GM12878 (cell line): ENCODE measurements at regions of chr16 and their contacts with region 1.

Region 1: GRCh38 chr16:84607694-84608093 is 10.2 kb downstream of the COTL1 start:
- DNase-seq: no peak
- ATAC-seq: peak; percentile 62
- H3K4me3 ChIP-seq: peak overlapping the region; percentile 43
- H3K27ac ChIP-seq: peak overlapping the region; percentile 63
- H3K4me1 ChIP-seq: peaks cover 60% of the 10 kb centered on the region
- H3K27me3 ChIP-seq: no peaks in the 10 kb centered on the region
- CTCF ChIP-seq: no peak
- EP300 ChIP-seq: peak; percentile 47 to 54; a peak in 2 of 4 replicates
- POLR2A ChIP-seq: peak; percentile 62; the same call in 1 of the 2 replicates
- RAD21 ChIP-seq: no peak

Region 2: DNA sequence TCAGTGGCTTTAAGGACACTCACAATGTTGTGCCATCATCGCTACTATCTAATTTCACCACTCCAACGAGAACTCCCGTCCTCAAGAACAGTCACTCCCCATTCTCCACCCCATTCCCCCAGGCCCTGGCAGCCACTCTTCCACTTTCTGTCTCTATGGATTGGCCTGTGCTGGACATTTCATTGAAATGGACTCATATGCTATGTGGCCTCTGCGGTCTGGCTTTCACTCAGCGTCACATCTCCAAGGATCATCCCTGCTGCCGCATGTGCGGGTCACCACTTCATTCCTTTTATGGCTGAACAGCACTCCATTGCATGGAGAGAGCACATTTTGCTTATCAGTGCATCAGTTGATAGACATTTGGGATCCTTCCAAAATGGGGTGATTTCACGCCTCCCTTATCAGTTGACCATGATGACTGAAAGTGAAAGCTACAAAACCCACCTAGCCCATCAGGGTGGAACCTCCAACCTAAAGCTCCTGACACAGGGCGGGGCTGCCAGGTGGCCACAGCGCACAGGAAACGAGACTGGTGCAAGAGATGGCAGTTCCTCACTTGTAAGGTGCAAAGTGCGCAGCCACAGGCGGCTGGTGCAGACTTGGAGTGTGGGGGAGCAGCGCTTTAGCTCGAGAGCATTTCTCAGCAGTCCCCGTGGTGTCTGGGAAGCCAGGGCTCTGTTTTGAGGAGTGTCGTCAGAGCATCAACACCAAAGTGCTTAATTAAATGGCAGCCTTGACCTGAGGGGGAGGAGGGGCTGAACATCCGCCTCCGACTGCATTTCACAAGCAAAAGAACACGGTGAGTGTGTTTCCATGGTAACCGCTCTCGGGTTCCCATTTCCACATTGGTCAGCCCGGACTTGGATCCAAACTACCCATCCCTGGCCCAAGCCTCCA is 13.6 kb before region 1 on chr16:
- CTCF ChIA-PET with region 1: interaction called, 9 read pairs
- POLR2A ChIA-PET with region 1: interaction called, 214 read pairs
- RAD21 ChIA-PET with region 1: interaction called, 224 read pairs
- SMC1A ChIA-PET with region 1: interaction called, 229 read pairs
- in situ Hi-C with region 1: no loop called
- intact Hi-C with region 1: no loop called
- DNase-seq: peak; percentile 99
- ATAC-seq: peak; percentile 87
- H3K4me3 ChIP-seq: peak overlapping the region; percentile 77
- H3K27ac ChIP-seq: peak overlapping the region; percentile 97
- H3K4me1 ChIP-seq: peaks cover 57% of the 10 kb centered on the region
- H3K27me3 ChIP-seq: no peaks in the 10 kb centered on the region
- CTCF ChIP-seq: no peak
- EP300 ChIP-seq: peak; percentile 96 to 99
- POLR2A ChIP-seq: peak; percentile 85
- RAD21 ChIP-seq: peak; percentile 20; the same call in 1 of the 2 replicates

Region 3: GRCh38 chr16:84647828-84648594 is 40.3 kb after region 1 on chr16 and contains the start of gene KLHL36:
- CTCF ChIA-PET with region 1: no interaction called
- POLR2A ChIA-PET with region 1: no interaction called
- RAD21 ChIA-PET with region 1: no interaction called
- SMC1A ChIA-PET with region 1: no interaction called
- in situ Hi-C with region 1: no loop called
- intact Hi-C with region 1: no loop called
- DNase-seq: no peak
- ATAC-seq: peak; percentile 84
- H3K4me3 ChIP-seq: peak within 1 kb of the TSS; percentile 81
- H3K27ac ChIP-seq: peak within 1 kb of the TSS; percentile 79
- H3K4me1 ChIP-seq: peaks cover 21% of the 10 kb centered on the region
- H3K27me3 ChIP-seq: no peaks in the 10 kb centered on the region
- CTCF ChIP-seq: peak in 2 of 3 experiments; percentile 3 to 9; a peak in 1 of 6 replicates
- EP300 ChIP-seq: no peak
- POLR2A ChIP-seq: peak; percentile 68
- RAD21 ChIP-seq: no peak
- polyA plus RNA-seq, gene KLHL36: 2.6 to 2.7 TPM